ENCODE measurements at regions of chr9 and their contacts with region 1.

Region 1: GRCh38 chr9:127214421-127215267 is 49.9 kb upstream of the GARNL3 start:
- DNase-seq: peak; percentile 77
- H3K4me3 Mint-ChIP-seq: no peak overlapping the region
- H3K27ac Mint-ChIP-seq: no peak overlapping the region
- H3K4me1 Mint-ChIP-seq: no peaks in the 10 kb centered on the region
- H3K27me3 Mint-ChIP-seq: peaks cover 68% of the 10 kb centered on the region

Region 2: DNA sequence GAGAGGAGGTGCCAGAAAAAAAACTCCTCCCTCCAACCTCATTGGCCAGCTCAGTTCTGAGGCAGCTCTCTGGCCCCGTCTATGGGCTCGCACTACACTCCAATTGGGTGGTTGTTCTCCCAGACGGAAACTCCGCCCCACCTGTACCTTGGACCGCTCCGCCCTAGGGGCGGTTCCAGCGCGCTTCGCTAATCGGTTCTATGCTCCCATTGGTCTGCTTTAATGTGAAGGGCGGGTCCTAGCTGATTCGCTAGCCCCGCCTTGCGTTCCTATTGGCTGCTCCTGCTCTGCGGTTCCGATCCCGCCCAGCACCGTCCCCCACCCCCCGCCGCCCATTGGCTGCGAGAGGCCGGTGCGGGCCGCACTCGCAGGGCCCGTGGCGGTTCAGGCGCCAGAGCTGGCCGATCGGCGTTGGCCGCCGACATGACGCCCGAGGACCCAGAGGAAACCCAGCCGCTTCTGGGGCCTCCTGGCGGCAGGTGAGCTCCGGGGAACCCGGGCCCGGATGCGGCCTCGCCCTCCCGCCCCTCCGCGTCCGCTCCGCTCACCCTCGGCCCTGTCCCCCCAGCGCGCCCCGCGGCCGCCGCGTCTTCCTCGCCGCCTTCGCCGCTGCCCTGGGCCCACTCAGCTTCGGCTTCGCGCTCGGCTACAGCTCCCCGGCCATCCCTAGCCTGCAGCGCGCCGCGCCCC is 182.3 kb after region 1 on chr9 and contains the start of gene SLC2A8:
- CTCF ChIA-PET with region 1: interaction called, 15 read pairs
- DNase-seq: peak; percentile 93
- H3K4me3 Mint-ChIP-seq: peak within 1 kb of the TSS; percentile 44
- H3K27ac Mint-ChIP-seq: no peak within 1 kb of the TSS
- H3K4me1 Mint-ChIP-seq: peaks cover 17% of the 10 kb centered on the region
- H3K27me3 Mint-ChIP-seq: peaks cover 100% of the 10 kb centered on the region

Region 3: DNA sequence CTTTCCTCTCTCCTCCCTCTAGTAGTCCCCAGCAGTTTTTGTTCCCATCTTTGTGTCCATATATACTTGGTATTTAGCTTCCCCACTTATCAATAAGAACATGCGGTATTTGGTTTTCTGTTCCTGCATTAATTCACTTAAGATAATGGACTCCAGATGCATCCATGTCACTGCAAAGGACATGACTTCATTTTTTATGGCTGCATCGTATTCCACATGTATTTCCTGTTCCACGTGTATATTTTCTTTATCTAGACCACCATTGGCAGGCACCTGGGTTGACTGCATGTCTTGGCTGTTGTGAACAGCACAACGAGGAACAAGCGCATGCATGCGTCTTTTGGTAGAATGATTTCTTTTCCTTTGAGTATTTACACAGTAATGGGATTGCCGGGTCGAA is 215.8 kb after region 1 on chr9:
- CTCF ChIA-PET with region 1: no interaction called
- DNase-seq: no peak
- H3K4me3 Mint-ChIP-seq: no peak overlapping the region
- H3K27ac Mint-ChIP-seq: no peak overlapping the region
- H3K4me1 Mint-ChIP-seq: peaks cover 27% of the 10 kb centered on the region
- H3K27me3 Mint-ChIP-seq: no peaks in the 10 kb centered on the region

Measured in activated naive CD4-positive, alpha-beta T cell treated with anti-CD3 and anti-CD28 coated beads, Interleukin-2, amount 10 ng/mL, durations not matched to agents 7 days and 5 days (primary cell).